ENCODE measurements at regions of chr13 and their contacts with region 1.

Region 1: DNA sequence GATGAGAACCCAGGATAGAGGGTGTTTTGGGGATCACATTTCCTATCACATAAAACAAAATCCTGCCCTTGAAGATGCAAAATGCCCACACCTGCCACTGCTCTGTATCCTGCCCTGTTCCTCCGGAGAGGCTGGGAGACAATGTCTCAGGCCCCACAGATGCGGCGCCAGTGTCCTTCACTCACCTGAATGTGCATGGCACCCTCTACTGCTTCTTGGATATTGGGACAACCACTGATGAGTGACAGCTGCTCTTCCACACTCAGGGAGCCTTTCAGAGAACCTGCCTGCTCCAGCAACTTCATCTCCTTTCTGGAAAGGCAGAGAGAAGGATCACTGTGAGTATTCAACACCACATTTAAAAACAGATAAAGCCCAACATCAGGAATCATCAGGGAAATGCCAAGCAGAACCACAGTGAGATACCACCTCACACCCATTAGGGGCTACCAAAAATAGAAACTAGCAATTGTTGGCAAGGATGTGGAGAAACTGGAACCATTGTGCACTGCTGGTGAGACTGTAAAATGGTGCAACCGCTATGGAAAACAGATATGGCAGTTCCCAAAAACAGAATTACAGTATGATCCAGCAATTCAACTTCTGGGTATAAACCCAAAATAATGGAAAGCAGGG is 36.4 kb downstream of the CRYL1 start:
- DNase-seq: peak in 1 of 2 donors; percentile 77
- ATAC-seq: peak in 2 of 3 donors; percentile 49
- H3K4me3 ChIP-seq: no peak overlapping the region
- H3K4me3 Mint-ChIP-seq: no peak overlapping the region
- H3K27ac ChIP-seq: no peak overlapping the region
- H3K27ac Mint-ChIP-seq: no peak overlapping the region
- H3K4me1 ChIP-seq: no peaks in the 10 kb centered on the region
- H3K4me1 Mint-ChIP-seq: peaks cover 0 to 4% of the 10 kb centered on the region in 2 donors
- H3K27me3 ChIP-seq: no peaks in the 10 kb centered on the region
- H3K27me3 Mint-ChIP-seq: no peaks in the 10 kb centered on the region
- CTCF ChIP-seq: peak; percentile 24

Region 2: GRCh38 chr13:20182231-20182846 is 307.0 kb before region 1 on chr13:
- intact Hi-C with region 1: loop called (anchors 1 kb)
- DNase-seq: peak in 1 of 2 donors; percentile 88
- ATAC-seq: peak; percentile 88 to 99 (median 97)
- H3K4me3 ChIP-seq: no peak overlapping the region
- H3K4me3 Mint-ChIP-seq: no peak overlapping the region
- H3K27ac ChIP-seq: no peak overlapping the region
- H3K27ac Mint-ChIP-seq: no peak overlapping the region
- H3K4me1 ChIP-seq: no peaks in the 10 kb centered on the region
- H3K4me1 Mint-ChIP-seq: no peaks in the 10 kb centered on the region
- H3K27me3 ChIP-seq: peaks cover 4% of the 10 kb centered on the region
- H3K27me3 Mint-ChIP-seq: peaks cover 26 to 43% of the 10 kb centered on the region in 2 donors
- CTCF ChIP-seq: peak; percentile 79

Region 3: DNA sequence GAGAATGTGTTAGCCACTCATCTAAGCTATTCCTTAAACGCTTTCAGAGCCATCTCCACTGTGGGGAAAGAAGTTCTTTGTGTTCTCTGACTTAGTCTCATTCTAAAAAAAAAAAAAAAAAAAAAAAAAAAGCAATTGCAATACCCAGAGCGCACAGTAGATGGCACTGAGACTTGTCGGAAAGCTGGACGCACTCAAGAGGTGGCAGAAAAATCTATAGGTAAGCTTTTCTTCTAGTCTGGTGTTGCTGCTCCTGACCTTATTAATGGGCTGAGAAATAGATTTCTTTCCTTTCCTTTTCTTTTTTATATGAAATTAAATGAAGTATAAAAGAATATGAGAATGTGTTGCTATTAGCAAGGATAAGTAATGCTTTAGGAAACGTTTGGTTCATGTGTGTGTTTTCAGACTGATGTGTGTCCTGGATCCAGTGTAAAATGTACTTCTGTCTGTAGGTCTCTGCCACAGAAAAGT is 291.9 kb before region 1 on chr13:
- intact Hi-C with region 1: loop called (anchors 5 kb)
- DNase-seq: peak in 1 of 2 donors; percentile 75
- ATAC-seq: peak; percentile 70 to 81 (median 77)
- H3K4me3 ChIP-seq: no peak overlapping the region
- H3K4me3 Mint-ChIP-seq: no peak overlapping the region
- H3K27ac ChIP-seq: no peak overlapping the region
- H3K27ac Mint-ChIP-seq: no peak overlapping the region
- H3K4me1 ChIP-seq: peaks cover 17% of the 10 kb centered on the region
- H3K4me1 Mint-ChIP-seq: peaks cover 14 to 18% of the 10 kb centered on the region in 2 donors
- H3K27me3 ChIP-seq: peaks cover 36% of the 10 kb centered on the region
- H3K27me3 Mint-ChIP-seq: peaks cover 53 to 61% of the 10 kb centered on the region in 2 donors
- CTCF ChIP-seq: peak; percentile 86

Region 4: GRCh38 chr13:20209948-20210347 is 279.4 kb before region 1 on chr13:
- intact Hi-C with region 1: no loop called
- DNase-seq: no peak
- ATAC-seq: no peak
- H3K4me3 ChIP-seq: no peak overlapping the region
- H3K4me3 Mint-ChIP-seq: no peak overlapping the region
- H3K27ac ChIP-seq: no peak overlapping the region
- H3K27ac Mint-ChIP-seq: no peak overlapping the region
- H3K4me1 ChIP-seq: no peaks in the 10 kb centered on the region
- H3K4me1 Mint-ChIP-seq: no peaks in the 10 kb centered on the region
- H3K27me3 ChIP-seq: peaks cover 3% of the 10 kb centered on the region
- H3K27me3 Mint-ChIP-seq: peaks cover 24 to 29% of the 10 kb centered on the region in 2 donors
- CTCF ChIP-seq: no peak

Region 5: DNA sequence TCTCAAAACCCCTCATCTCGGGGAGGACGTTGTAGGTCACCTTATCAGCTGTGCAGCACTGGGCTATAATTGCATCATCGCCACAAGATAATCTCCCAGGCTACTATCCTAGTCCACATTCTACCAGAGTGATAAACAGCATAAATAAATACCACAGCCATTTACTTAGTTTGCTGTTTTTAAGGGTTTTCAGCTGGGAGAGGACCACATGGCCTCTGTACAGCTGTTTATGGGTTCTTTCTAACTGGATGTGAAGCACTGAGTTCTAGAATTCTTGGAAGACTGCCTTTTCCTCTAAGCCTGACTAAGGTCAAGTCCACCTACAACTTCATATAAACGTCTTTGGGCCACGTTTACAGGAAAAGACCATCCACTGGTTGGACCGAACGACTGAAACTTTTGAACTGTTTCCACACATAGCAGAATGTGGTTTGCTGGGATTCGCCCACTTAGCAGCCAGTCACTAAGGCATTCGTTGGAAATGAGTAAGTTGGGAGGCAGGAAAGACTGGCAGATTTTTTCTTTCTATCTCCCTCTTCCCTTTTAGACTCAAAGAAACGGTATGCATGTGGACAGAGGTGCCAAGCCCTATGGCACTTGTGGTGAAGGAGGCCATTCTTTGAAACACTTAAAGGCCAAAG is 1939.0 kb after region 1 on chr13:
- intact Hi-C with region 1: no loop called
- DNase-seq: no peak
- ATAC-seq: no peak
- H3K4me3 ChIP-seq: no peak overlapping the region
- H3K4me3 Mint-ChIP-seq: no peak overlapping the region
- H3K27ac ChIP-seq: no peak overlapping the region
- H3K27ac Mint-ChIP-seq: no peak overlapping the region
- H3K4me1 ChIP-seq: no peaks in the 10 kb centered on the region
- H3K4me1 Mint-ChIP-seq: no peaks in the 10 kb centered on the region
- H3K27me3 ChIP-seq: no peaks in the 10 kb centered on the region
- H3K27me3 Mint-ChIP-seq: no peaks in the 10 kb centered on the region
- CTCF ChIP-seq: no peak